HEK293 (cell line): ENCODE measurements at regions of chr6 and their contacts with region 1.

Region 1: GRCh38 chr6:63307581-63308246 is 12.1 kb downstream of the LGSN start:
- H3K4me3 ChIP-seq: no peak overlapping the region
- H3K27ac ChIP-seq: no peak overlapping the region
- H3K4me1 ChIP-seq: no peaks in the 10 kb centered on the region
- CTCF ChIP-seq: no peak

Region 2: GRCh38 chr6:63149730-63150129 is 158.0 kb before region 1 on chr6:
- CTCF ChIA-PET with region 1: no interaction called
- POLR2A ChIA-PET with region 1: no interaction called
- H3K4me3 ChIP-seq: no peak overlapping the region
- H3K27ac ChIP-seq: no peak overlapping the region
- H3K4me1 ChIP-seq: no peaks in the 10 kb centered on the region
- CTCF ChIP-seq: no peak

Region 3: GRCh38 chr6:63319939-63320338 is 12.2 kb after region 1 on chr6 and contains the start of gene LGSN:
- CTCF ChIA-PET with region 1: interaction called, 22 read pairs
- POLR2A ChIA-PET with region 1: no interaction called
- H3K4me3 ChIP-seq: no peak within 1 kb of the TSS
- H3K27ac ChIP-seq: no peak within 1 kb of the TSS
- H3K4me1 ChIP-seq: no peaks in the 10 kb centered on the region
- CTCF ChIP-seq: no peak